ENCODE measurements at regions of chr2 and their contacts with region 1.

Region 1: DNA sequence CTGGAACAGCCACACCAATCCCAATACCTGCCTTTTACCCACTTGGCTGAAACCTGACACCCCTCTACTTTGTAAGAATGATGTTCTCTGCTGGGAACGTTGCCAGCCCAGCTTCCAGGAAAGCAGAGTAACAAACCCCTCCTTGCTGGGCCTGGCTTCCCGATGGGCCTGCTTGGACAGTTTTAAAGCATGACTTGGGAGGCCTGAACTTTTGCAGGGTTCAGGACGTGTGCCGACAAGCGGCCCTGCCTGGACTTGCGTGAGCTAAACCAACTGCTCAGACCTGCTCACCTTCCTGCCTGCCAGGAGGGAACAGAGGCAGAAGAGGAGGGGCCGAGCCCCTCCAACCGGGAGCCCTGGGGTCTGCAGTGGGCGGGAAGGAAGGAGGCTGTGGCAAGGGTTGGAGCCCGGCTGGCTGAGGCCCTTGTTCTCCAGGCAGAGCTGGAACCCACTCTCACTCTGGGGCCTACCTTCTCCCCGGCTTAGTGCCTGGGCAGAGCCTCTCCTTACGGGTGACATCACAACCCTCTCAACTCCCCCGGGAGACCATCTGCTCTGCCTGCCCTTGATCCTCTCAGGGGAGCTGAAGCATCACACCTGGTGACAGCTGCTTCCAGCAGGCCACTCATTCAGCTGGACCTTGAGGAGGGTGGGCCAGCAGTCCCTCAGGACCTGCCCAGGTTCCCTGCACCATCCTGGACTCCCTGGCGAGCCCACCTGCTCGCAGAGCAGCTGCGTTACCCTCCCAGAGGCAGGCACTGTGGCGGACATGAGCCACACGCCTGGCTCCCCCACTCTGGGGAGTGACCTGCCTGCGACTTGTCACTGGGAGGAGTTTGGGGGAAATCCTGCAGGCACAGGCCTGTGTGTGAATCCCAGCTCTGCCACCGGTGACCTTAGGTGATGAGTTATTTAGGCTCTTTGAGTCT is 13.2 kb downstream of the HS6ST1 start:
- DNase-seq: peak; percentile 92

Region 2: GRCh38 chr2:128187032-128187654 is 118.3 kb before region 1 on chr2:
- intact Hi-C with region 1: loop called (anchors 10 kb)
- DNase-seq: no peak

Region 3: DNA sequence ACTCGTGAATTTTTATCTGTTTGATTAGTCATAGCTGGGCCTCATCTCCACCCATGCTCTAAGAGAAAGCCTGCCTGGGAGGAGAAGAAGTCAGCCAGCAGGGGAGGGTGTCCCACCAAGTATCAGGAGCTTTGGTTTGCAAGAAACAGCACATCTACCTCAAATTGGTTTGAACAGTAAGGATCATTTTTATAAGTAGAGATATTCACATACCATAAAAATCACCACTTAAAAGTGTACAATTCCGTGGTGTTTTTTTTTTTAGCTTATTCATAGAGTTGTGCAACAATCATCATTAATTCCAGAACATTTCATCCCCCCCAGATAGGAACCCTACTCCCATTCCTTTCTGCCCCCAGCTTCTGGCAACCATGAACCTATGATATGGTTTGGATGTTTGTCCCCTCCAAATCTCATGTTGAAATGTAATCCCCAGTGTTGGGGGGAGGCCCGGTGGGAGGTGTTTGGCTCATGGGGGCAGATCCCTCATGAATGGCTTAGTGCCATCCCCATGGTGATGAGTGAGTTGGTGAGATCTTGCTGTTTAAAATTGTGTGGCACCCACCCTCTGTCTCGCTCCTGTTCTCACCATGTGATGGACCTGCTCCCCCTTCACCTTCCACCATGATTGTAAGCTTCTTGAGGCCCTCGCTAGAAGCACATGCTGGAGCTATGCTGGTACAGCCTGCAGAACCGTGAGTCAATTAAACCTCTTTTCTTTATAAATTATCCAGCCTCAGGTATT is 49.5 kb after region 1 on chr2:
- intact Hi-C with region 1: no loop called
- DNase-seq: no peak

Measured in posterior vena cava (tissue), 2 donors.